Dorsolateral prefrontal cortex (tissue), 120 donors: ENCODE measurements at regions of chr16 and their contacts with region 1.

Region 1: GRCh38 chr16:9372934-9373890 is 281.8 kb downstream of the HAPSTR1 start:
- DNase-seq: peak in 9 of 10 donors; percentile 23 to 76 (median 69)
- H3K4me3 ChIP-seq: no peak overlapping the region
- H3K27ac ChIP-seq: peak overlapping the region in 16 of 59 donors; percentile 6 to 74 (median 40)
- H3K27me3 ChIP-seq: no peaks in the 10 kb centered on the region
- CTCF ChIP-seq: peak in 42 of 56 donors; percentile 8 to 55 (median 32)

Region 2: DNA sequence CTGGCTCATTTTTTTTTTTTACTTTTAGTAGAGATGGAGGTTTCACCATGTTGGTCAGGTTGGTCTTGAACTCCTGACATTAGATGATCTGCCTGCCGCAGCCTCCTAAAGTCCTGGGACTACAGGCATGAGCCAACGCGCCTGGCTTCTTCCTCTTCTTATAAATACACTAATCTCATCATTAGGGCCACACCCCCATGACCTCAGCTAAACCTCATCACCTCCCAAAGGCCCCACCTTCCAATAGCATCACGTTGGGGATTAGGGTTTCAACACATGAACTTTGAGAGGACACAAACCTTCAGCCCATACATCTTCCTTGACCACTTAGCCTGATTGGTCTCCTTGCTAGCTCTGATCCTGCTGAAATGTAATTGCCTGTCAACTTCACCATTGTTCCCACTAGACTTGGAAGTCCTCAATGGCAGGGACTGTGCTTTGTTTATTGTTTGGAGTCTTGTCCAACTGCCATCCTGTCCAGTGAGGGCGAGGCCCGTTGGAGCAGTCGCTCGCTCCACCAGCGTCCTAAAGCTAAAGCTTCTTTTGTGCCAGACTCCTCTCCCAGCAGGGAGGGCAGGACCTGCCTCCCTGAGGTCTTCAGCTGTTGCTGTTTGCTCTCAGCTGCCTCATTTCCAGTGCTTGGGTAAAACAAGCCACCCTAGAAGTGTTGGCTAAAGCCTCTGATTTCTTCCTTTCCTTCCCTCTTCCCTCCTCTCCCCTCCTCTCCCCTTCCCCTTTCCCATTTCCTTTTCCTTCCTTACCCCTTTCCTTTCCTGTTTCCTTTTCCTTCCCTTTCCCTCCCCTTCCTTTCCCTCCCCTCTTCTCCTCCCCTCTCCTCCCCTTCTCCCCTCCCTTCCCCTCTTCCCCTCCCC is 196.4 kb before region 1 on chr16:
- intact Hi-C with region 1: loop called in 1 of 2 experiments (anchors 5 kb)
- DNase-seq: peak; percentile 5 to 87 (median 76)
- H3K4me3 ChIP-seq: peak overlapping the region in 2 of 59 donors; percentile 10 to 16
- H3K27ac ChIP-seq: peak overlapping the region in 55 of 59 donors; percentile 3 to 92 (median 79)
- H3K27me3 ChIP-seq: no peaks in the 10 kb centered on the region
- CTCF ChIP-seq: peak in 10 of 56 donors; percentile 11 to 33 (median 24)

Region 3: DNA sequence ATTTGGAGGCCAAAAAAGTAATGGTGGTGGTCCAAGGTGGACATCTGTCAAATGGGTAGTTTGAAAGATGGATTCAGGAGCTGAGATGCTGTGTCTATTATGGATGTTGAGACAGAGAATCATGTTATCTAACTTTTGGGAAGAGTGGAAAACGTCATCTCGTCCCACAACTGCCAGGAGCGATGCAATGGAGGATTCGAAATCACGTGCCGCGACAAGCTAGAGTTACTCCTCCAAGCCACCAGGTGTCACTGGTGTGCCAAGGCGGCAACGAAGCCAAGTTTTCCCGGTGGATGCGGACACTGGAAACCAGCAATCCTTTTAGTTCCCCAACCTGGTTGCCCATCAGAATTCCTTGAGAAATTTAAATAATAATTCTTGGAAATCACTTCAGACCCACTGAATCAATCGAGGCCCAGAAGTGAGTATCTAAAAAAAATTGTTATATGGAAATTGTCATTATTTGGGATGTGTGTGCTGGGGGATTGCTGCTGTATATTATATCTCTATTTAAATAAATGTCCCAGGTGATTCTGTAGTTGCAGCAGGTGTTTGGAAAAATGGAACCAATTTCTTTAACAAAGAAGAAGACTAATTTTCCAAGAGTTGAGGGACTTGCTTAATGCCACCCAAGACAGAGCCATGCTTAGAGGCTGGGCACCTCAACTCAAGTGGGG is 75.6 kb before region 1 on chr16:
- intact Hi-C with region 1: loop called in 1 of 2 experiments (anchors 5 kb)
- DNase-seq: peak in 7 of 10 donors; percentile 25 to 64 (median 38)
- H3K4me3 ChIP-seq: no peak overlapping the region
- H3K27ac ChIP-seq: no peak overlapping the region
- H3K27me3 ChIP-seq: no peaks in the 10 kb centered on the region
- CTCF ChIP-seq: peak; percentile 25 to 84 (median 67)

Region 4: DNA sequence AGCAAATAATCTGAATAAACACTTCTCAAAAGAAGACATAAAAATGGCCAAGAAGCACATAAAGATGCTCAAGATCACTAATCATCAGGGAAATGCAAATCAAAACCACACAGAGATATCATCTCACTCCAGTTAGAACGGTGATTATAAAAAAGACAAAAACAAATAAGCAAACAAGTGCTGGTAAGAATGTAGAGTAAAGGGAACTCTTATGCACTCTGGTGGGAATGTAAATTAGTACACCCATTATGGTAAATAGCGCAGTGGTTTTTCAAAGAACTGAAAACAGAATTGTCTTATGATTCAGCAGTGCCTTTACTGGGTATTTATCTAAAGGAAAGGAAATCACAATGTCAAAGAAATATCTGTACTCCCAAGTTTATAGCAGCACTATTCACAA is 61.4 kb after region 1 on chr16:
- intact Hi-C with region 1: no loop called
- DNase-seq: no peak
- H3K4me3 ChIP-seq: no peak overlapping the region
- H3K27ac ChIP-seq: no peak overlapping the region
- H3K27me3 ChIP-seq: no peaks in the 10 kb centered on the region
- CTCF ChIP-seq: no peak